GM12878 (cell line): ENCODE measurements at regions of chr19 and their contacts with region 1.

Region 1: DNA sequence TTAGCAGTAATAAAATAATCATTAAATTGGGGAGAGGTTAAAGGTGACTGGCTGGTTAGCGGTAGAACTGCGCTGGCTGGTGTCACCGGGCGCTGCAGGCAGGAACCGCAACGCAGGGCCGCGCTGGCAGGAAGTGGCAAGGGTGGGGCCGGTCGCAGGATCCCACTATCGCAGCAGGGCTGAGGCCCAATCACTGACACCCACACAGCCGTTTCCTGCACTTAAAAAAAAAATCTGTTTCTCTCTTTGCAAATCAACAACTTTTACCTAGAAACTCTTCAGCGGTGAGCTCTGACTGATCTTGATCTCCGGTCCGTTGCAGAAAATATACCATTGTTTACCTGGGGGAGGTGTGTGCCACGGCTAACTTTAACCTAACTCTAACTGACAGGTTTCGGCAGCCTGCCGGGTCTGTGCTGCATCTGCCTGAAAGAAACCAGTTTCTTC is 46.9 kb downstream of the KLF2 start:
- DNase-seq: peak; percentile 79
- ATAC-seq: peak; percentile 86
- H3K4me3 ChIP-seq: peak overlapping the region; percentile 3; the same call in 1 of the 2 replicates
- H3K27ac ChIP-seq: peak overlapping the region; percentile 81
- H3K4me1 ChIP-seq: peaks cover 62% of the 10 kb centered on the region
- H3K27me3 ChIP-seq: no peaks in the 10 kb centered on the region
- CTCF ChIP-seq: no peak
- EP300 ChIP-seq: peak; percentile 49 to 97; a peak in 3 of 4 replicates
- POLR2A ChIP-seq: peak; percentile 55
- RAD21 ChIP-seq: no peak

Region 2: DNA sequence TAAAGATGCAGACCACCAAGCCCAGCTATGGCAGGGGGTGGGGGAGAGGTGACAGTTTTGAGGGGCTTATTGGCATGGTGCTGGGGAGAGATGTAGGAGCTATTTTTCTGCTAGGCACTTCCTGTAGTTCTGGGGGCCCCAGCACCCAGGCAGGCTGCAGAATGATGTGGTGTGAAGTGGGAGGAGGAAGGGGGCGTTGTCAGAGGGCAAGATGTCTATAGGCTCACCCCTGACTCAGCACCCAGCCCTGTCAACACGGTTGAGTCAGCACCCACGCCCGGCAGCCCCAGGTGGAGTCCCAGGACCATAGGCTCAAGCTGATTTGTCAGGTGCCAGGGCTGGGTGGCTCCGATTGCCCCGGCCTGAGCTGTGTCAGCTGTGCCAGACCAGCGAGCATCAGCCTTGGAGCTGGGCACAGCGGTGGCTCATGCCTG is 41.2 kb before region 1 on chr19:
- CTCF ChIA-PET with region 1: interaction called, 13 read pairs
- POLR2A ChIA-PET with region 1: interaction called, 8 read pairs
- RAD21 ChIA-PET with region 1: interaction called, 32 read pairs
- SMC1A ChIA-PET with region 1: interaction called, 28 read pairs
- in situ Hi-C with region 1: no loop called
- intact Hi-C with region 1: loop called (anchors 2 kb)
- DNase-seq: no peak
- ATAC-seq: peak; percentile 78
- H3K4me3 ChIP-seq: no peak overlapping the region
- H3K27ac ChIP-seq: no peak overlapping the region
- H3K4me1 ChIP-seq: peaks cover 33% of the 10 kb centered on the region
- H3K27me3 ChIP-seq: no peaks in the 10 kb centered on the region
- CTCF ChIP-seq: no peak
- EP300 ChIP-seq: no peak
- POLR2A ChIP-seq: peak; percentile 46; the same call in 1 of the 2 replicates
- RAD21 ChIP-seq: no peak

Region 3: DNA sequence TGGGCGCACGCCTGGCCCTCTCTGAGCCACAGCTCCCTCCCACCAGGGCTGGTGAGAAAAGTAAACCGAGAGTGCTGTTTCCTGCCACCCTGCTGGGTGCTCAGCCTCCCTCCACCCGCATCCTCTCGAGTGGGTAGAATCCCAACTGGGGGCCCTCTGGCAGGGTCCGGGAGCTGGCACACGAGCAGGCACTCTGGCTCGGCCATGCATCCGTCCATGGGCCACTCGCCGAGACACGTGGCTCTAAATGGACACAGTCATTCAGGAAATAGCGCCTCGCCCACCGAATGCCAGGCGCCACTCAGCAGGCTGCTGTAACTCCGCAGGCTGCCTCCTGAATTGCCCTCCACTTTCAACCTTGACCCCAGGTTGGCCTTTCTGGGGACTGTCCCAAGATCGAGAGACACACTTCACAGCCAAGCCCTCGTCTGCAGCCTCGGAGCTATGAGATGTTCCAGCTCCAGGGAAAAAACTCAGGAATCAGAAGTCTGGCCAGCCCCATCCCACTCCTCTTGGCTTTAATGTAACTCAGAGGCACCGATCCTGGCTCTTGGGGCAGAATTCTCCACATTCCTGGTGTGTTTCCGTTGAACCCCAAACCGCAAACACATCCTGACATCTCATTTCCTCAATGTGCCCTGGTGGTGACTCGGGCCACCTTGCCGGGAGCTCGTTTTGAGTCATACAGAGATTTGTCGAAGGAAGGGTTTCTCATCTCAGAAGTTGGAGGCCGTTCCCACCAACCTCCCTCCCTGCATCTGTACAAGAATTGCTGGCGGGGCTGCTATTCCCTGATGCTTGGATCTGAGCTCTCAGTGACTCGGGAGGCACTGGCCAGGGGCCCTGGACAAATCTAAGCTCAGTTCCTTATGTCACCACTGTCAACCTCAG is 32.8 kb before region 1 on chr19:
- CTCF ChIA-PET with region 1: interaction called, 16 read pairs
- POLR2A ChIA-PET with region 1: interaction called, 13 read pairs
- RAD21 ChIA-PET with region 1: interaction called, 26 read pairs
- SMC1A ChIA-PET with region 1: interaction called, 42 read pairs
- in situ Hi-C with region 1: no loop called
- intact Hi-C with region 1: loop called (anchors 1 kb)
- DNase-seq: peak; percentile 59
- ATAC-seq: peak; percentile 69
- H3K4me3 ChIP-seq: peak overlapping the region; percentile 25; the same call in 1 of the 2 replicates
- H3K27ac ChIP-seq: peak overlapping the region; percentile 34; the same call in 1 of the 2 replicates
- H3K4me1 ChIP-seq: peaks cover 46% of the 10 kb centered on the region
- H3K27me3 ChIP-seq: no peaks in the 10 kb centered on the region
- CTCF ChIP-seq: no peak
- EP300 ChIP-seq: peak; percentile 76 to 84; a peak in 3 of 4 replicates
- POLR2A ChIP-seq: no peak
- RAD21 ChIP-seq: no peak

Region 4: GRCh38 chr19:16394681-16395375 is 23.3 kb after region 1 on chr19:
- CTCF ChIA-PET with region 1: no interaction called
- POLR2A ChIA-PET with region 1: no interaction called
- RAD21 ChIA-PET with region 1: no interaction called
- SMC1A ChIA-PET with region 1: no interaction called
- in situ Hi-C with region 1: no loop called
- intact Hi-C with region 1: no loop called
- DNase-seq: no peak
- ATAC-seq: no peak
- H3K4me3 ChIP-seq: no peak overlapping the region
- H3K27ac ChIP-seq: no peak overlapping the region
- H3K4me1 ChIP-seq: peaks cover 13% of the 10 kb centered on the region
- H3K27me3 ChIP-seq: no peaks in the 10 kb centered on the region
- CTCF ChIP-seq: no peak
- EP300 ChIP-seq: no peak
- POLR2A ChIP-seq: no peak
- RAD21 ChIP-seq: no peak